Colonic mucosa (tissue), 4 donors: ENCODE measurements at regions of chr4 and their contacts with region 1.

Region 1: DNA sequence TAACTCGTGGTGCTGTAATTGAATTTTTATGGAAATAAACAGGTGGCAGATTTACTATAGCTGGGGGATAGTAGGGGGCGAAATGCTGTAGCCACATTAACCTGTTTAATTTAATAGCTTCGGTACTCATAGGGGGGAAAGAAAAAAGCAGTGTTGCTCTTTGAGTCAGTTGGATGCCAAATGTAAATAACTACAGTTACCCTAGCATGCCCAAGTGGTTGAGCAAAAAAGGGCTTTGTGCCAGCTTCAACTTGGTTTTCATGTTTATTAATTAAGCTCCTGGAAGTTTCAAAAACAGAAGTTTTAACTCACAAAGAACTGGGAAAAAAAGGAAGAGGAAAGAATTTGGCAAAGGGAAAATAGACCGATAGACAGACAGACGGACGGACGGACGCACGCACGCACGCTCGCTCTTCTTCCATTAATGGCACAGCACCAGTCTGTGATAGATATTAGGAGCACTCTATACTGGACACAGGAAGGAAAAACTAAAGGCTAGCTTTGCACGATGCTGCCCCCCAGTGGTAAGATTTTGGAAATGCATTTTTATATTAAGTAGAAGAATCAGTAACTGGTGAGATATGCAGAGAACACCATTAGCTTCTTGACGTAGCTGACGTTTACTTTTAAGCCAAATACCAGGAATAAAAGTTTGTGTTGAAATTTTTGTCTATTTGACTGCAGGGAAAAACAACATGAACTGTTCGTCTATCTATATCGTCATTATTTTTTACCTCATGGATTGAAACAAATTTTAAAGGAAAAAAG is 151.8 kb downstream of the SLC7A11 start:
- DNase-seq: peak; percentile 71
- H3K4me3 ChIP-seq: no peak overlapping the region
- H3K27ac ChIP-seq: no peak overlapping the region
- H3K4me1 ChIP-seq: no peaks in the 10 kb centered on the region
- H3K27me3 ChIP-seq: no peaks in the 10 kb centered on the region
- CTCF ChIP-seq: peak; percentile 78

Region 2: DNA sequence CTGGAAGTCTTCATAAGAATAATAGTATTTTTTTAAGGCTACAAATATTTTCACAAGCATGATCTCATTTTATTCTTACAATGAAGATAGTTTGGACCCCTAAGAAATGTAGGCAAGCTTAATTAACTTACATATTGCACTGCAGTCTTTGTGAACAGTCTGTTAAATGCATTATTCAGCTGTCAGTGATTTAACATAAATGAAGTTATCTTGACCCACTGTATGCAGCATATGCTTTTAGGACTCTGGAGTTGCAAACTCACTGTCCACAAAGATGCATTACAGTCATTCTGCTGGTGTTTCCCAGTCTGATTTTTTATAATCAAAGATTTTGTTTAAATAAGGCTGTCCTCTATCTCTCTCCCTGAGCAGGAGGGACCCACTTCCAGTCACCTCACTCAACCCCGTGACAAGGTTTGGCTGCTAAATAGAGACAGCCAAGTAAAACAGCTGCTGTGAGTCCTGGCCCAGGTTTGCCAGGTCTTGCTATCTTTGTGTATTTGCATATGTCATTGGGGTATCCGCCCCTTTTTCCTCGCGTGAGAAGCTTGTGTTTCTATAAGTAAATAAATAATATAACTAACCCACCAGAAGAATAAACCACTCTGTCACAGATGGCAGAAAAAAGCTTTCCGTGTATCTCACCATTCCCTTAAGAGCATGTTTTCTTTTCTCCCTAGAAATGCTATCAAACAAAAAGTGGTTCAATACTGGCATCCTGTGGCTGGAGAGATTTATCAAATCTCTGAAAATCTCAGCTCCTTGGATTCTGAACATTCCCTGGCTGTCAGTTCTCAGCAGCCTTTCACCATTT is 84.9 kb after region 1 on chr4:
- intact Hi-C with region 1: loop called (anchors 5 kb)
- DNase-seq: peak; percentile 43
- H3K4me3 ChIP-seq: no peak overlapping the region
- H3K27ac ChIP-seq: no peak overlapping the region
- H3K4me1 ChIP-seq: no peaks in the 10 kb centered on the region
- H3K27me3 ChIP-seq: no peaks in the 10 kb centered on the region
- CTCF ChIP-seq: peak; percentile 15